Aorta (tissue), 5 donors: ENCODE measurements at regions of chr2 and their contacts with region 1.

Region 1: DNA sequence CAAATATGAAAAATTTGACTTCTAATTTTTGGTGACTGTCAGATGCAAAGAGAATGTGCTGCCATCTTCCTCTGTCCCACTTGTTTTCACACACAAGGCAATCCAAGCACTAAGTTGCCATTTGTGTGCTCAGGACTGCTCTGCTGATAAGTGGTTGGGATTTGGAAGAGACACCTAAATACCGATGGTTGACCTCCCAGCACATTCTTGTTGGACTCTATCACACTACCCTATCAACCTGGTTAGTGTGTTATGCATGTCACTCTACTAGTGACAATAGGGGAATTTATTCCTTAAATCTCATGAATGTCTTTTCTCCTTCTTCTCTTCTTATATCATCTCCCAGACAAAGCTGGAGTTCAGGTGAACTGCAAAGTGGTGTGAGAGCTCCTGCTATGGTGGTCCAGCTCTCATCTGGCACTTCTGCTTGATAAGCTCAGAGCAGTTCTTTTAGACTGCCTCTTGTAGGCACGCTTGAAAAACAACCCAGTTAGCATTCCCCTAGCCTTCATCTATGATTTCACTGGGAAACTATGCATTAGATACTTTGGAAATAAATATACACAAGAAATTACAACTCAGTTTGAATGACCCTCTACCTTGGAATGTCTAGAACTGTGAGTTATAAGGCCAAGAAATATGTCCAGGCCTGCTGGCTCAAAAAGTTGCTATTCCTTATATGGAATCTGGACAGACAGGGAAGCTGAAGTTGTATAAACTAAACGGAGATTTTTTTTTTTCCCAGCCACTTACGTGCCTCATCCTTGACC is 404.8 kb downstream of the MEIS1 start:
- DNase-seq: no peak
- ATAC-seq: peak; percentile 54
- H3K4me3 ChIP-seq: no peak overlapping the region
- H3K27ac ChIP-seq: peak overlapping the region; percentile 83 to 90
- H3K4me1 ChIP-seq: peaks cover 0 to 2% of the 10 kb centered on the region in 2 donors
- H3K27me3 ChIP-seq: no peaks in the 10 kb centered on the region

Region 2: DNA sequence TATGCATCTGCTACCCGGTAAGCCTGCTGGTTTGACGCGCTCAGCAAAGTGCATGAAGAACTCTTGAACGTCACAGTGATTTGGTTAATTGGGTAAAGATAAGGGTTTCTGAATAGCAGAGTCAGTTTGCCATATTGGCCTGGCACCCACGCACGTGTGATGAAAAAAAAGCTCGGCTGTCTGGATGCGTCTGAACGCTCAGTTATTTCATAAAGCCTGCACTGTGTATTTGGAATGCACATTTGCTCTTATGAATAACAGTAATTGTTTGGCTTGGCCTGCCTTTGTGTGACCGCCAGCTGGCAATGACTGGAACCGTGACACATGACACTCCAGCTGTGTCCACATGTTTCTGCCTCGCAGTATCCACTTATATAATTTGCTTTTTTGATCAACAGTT is 534.0 kb before region 1 on chr2:
- intact Hi-C with region 1: loop called in 1 of 2 experiments (anchors 10 kb)
- DNase-seq: peak; percentile 72 to 81
- ATAC-seq: peak; percentile 59
- H3K4me3 ChIP-seq: no peak overlapping the region
- H3K27ac ChIP-seq: no peak overlapping the region
- H3K4me1 ChIP-seq: peaks cover 0 to 3% of the 10 kb centered on the region in 2 donors
- H3K27me3 ChIP-seq: no peaks in the 10 kb centered on the region

Region 3: DNA sequence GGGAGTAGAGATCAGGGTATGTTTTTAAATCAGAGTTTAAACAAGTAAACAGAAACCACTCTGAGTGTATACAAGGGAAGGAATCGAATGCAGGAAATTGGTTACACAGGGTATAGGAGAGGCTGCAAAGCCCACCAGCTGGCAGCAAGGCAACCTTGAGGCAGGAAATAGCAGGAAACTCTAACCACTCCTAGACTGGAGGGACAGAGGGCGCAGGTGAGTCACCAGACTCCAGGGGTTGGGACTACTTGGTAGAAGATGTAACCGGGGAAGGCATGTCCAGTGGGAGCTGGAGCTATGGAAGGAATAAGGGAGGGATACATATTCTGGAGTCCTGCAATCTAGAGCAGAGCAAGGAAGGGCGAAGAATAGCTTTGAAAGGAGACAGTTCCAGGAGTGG is 252.5 kb before region 1 on chr2:
- intact Hi-C with region 1: loop called in 1 of 2 experiments (anchors 10 kb)
- DNase-seq: no peak
- ATAC-seq: no peak
- H3K4me3 ChIP-seq: no peak overlapping the region
- H3K27ac ChIP-seq: no peak overlapping the region
- H3K4me1 ChIP-seq: no peaks in the 10 kb centered on the region
- H3K27me3 ChIP-seq: no peaks in the 10 kb centered on the region